K562 (cell line): ENCODE measurements at regions of chr2 and their contacts with region 1.

Region 1: DNA sequence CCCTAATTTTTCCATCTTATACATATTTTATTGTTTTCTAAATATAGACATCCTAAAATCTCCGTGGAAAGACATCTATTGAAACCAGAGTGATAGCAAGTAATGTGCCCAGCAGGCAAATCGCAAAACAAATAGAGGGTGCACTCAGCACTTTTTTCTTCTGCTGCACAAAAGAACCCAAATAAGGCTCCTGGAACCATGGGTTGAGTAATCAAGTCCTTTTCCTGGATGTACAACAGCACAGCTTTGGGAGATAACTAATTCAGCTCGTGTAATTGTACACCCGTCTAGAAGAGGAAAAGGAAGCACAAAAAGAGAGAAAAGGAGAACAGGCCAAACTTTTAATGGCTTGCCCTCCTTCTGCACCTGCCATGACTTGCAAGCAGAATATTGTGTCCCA is 126.9 kb upstream of the TLK1 start:
- DNase-seq: no peak
- ATAC-seq: no peak
- H3K4me3 ChIP-seq: no peak overlapping the region
- H3K27ac ChIP-seq: no peak overlapping the region
- H3K4me1 ChIP-seq: no peaks in the 10 kb centered on the region
- H3K27me3 ChIP-seq: peaks cover 4 to 10% of the 10 kb centered on the region in 2 experiments; a peak in 3 of 5 replicates
- CTCF ChIP-seq: no peak
- EP300 ChIP-seq: no peak
- POLR2A ChIP-seq: no peak
- RAD21 ChIP-seq: no peak

Region 2: GRCh38 chr2:171134624-171135230 is 152.9 kb before region 1 on chr2:
- CTCF ChIA-PET with region 1: no interaction called
- POLR2A ChIA-PET with region 1: no interaction called
- in situ Hi-C with region 1: no loop called
- intact Hi-C with region 1: no loop called
- DNase-seq: no peak
- ATAC-seq: no peak
- H3K4me3 ChIP-seq: no peak overlapping the region
- H3K27ac ChIP-seq: no peak overlapping the region
- H3K4me1 ChIP-seq: peaks cover 8 to 28% of the 10 kb centered on the region in 2 experiments; a peak in 4 of 5 replicates
- H3K27me3 ChIP-seq: no peaks in the 10 kb centered on the region
- CTCF ChIP-seq: no peak
- EP300 ChIP-seq: no peak
- POLR2A ChIP-seq: no peak
- RAD21 ChIP-seq: no peak

Region 3: GRCh38 chr2:171297951-171298350 is 10.3 kb after region 1 on chr2:
- CTCF ChIA-PET with region 1: no interaction called
- POLR2A ChIA-PET with region 1: interaction called, 11 read pairs
- in situ Hi-C with region 1: no loop called
- intact Hi-C with region 1: no loop called
- DNase-seq: no peak
- ATAC-seq: no peak
- H3K4me3 ChIP-seq: no peak overlapping the region
- H3K27ac ChIP-seq: no peak overlapping the region
- H3K4me1 ChIP-seq: no peaks in the 10 kb centered on the region
- H3K27me3 ChIP-seq: peaks cover 2 to 12% of the 10 kb centered on the region in 2 experiments; a peak in 3 of 5 replicates
- CTCF ChIP-seq: no peak
- EP300 ChIP-seq: no peak
- POLR2A ChIP-seq: no peak
- RAD21 ChIP-seq: no peak